ENCODE measurements at regions of chr7 and their contacts with region 1.

Region 1: GRCh38 chr7:17663061-17663675 is 277.1 kb downstream of the SNX13 start:
- DNase-seq: peak; percentile 69
- H3K4me3 ChIP-seq: no peak overlapping the region
- H3K27ac ChIP-seq: peak overlapping the region; percentile 90
- H3K4me1 ChIP-seq: peaks cover 34% of the 10 kb centered on the region
- H3K27me3 ChIP-seq: no peaks in the 10 kb centered on the region
- CTCF ChIP-seq: no peak

Region 2: GRCh38 chr7:17564678-17565212 is 98.4 kb before region 1 on chr7:
- CTCF ChIA-PET with region 1: no interaction called
- dilution Hi-C with region 1: no loop called
- in situ Hi-C with region 1: no loop called
- intact Hi-C with region 1: no loop called
- DNase-seq: peak; percentile 37
- H3K4me3 ChIP-seq: no peak overlapping the region
- H3K27ac ChIP-seq: no peak overlapping the region
- H3K4me1 ChIP-seq: peaks cover 22% of the 10 kb centered on the region
- H3K27me3 ChIP-seq: no peaks in the 10 kb centered on the region
- CTCF ChIP-seq: no peak

Region 3: DNA sequence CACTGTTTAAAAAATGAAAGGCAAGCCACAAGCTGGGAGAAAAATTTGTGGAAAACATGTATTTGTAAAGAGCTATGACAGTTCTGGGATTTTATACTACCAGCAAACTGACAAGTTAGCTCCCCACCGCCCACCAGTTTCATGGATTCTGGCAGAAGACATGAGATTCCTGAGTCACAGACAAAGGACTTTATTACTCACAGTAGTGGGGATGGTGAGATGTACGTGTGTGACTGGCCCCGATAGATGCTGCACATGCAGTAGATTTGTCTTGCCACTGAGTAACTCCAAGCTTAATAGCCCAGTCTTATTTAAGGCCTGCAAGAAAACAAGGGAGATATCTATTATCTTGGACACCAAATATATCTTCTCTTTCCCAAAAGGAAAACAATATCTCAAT is 83.0 kb before region 1 on chr7:
- CTCF ChIA-PET with region 1: no interaction called
- dilution Hi-C with region 1: loop called (anchors 5 kb)
- in situ Hi-C with region 1: no loop called
- intact Hi-C with region 1: no loop called
- DNase-seq: peak; percentile 86
- H3K4me3 ChIP-seq: no peak overlapping the region
- H3K27ac ChIP-seq: peak overlapping the region; percentile 6
- H3K4me1 ChIP-seq: peaks cover 15% of the 10 kb centered on the region
- H3K27me3 ChIP-seq: no peaks in the 10 kb centered on the region
- CTCF ChIP-seq: no peak

Region 4: GRCh38 chr7:17599733-17600685 is 63.2 kb before region 1 on chr7:
- CTCF ChIA-PET with region 1: no interaction called
- dilution Hi-C with region 1: no loop called
- in situ Hi-C with region 1: no loop called
- intact Hi-C with region 1: no loop called
- DNase-seq: peak; percentile 93
- H3K4me3 ChIP-seq: no peak overlapping the region
- H3K27ac ChIP-seq: peak overlapping the region; percentile 80
- H3K4me1 ChIP-seq: peaks cover 48% of the 10 kb centered on the region
- H3K27me3 ChIP-seq: no peaks in the 10 kb centered on the region
- CTCF ChIP-seq: no peak

Region 5: DNA sequence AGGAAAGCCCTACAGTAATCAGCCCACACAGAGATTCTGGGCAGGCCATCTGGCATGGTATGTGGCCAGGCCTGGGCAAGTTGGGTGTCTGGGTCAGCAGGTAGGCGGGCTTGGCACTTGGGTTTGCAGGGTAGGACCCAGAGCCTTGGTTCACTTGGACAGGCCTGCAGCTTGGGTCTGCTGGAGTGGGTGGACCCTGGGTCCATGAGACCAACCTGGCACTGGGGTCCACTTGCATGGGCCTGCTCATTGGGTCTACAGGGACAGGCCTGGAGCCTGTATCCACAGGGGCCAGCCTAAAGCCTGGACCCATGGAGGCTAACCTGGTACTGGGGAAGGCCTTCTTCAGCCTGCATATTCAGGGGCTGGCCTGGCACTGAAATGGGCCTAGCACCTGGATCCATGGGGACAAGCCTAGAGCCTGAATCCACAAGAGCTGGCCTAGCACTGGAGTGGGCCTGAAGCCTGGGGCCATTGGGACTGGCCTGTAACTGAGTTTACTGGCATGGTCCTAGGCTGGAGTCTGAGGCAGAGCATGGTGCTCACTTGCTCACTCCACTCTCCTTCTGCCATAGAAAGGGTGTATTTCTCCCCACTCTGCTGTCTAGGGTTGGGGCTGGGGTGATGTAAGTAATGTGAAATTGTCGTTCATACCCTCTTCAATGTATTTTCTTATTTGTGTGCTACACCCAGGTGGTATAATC is 49.7 kb before region 1 on chr7:
- CTCF ChIA-PET with region 1: no interaction called
- dilution Hi-C with region 1: loop called (anchors 5 kb)
- in situ Hi-C with region 1: no loop called
- intact Hi-C with region 1: no loop called
- DNase-seq: no peak
- H3K4me3 ChIP-seq: no peak overlapping the region
- H3K27ac ChIP-seq: no peak overlapping the region
- H3K4me1 ChIP-seq: peaks cover 5% of the 10 kb centered on the region
- H3K27me3 ChIP-seq: no peaks in the 10 kb centered on the region
- CTCF ChIP-seq: no peak

Region 6: DNA sequence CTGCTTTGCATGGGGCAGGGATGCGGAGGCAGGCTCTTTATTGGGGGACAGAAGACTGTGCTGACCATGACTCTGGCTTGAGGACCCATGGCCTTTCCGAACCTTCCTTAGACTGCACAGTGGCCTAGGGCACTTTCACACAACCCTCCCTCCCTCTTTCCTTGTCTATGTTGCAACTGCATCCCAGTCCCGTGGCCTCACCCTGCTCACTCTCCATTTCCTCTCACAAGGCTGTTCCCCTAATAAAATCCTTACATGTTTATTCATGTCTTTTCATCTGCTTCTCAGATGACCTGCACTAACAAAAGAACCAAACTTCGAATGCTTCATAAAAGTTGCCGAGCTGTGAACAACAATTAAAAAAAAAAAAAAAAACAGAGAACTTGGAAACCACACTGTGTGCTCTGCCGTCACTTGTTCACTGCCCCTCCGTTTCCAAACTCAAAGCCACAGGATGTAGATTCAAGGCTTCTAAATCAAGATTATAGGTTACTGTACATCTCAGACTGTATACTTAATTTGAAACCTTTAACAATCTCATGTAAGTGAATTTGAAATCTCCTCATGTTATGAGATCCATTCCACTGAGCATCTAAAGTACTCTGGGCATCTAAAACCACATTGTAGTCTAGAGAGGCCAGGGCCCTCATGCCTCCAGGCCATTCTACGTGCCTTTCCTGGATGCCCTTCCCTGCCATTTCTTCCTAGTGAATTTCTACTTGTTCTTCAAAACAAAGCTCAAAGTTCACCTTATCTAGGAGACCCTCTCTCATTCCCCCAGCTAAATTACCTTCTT is 11.2 kb after region 1 on chr7:
- CTCF ChIA-PET with region 1: no interaction called
- dilution Hi-C with region 1: no loop called
- in situ Hi-C with region 1: no loop called
- intact Hi-C with region 1: loop called (anchors 1 kb)
- DNase-seq: peak; percentile 94
- H3K4me3 ChIP-seq: no peak overlapping the region
- H3K27ac ChIP-seq: peak overlapping the region; percentile 94
- H3K4me1 ChIP-seq: peaks cover 54% of the 10 kb centered on the region
- H3K27me3 ChIP-seq: no peaks in the 10 kb centered on the region
- CTCF ChIP-seq: no peak